ENCODE measurements at regions of chr4 and their contacts with region 1.

Region 1: GRCh38 chr4:130349745-130350144 is 1253.8 kb downstream of the C4orf33 start:
- DNase-seq: no peak
- ATAC-seq: no peak
- H3K4me3 ChIP-seq: no peak overlapping the region
- H3K27ac ChIP-seq: no peak overlapping the region
- H3K4me1 ChIP-seq: no peaks in the 10 kb centered on the region
- H3K27me3 ChIP-seq: no peaks in the 10 kb centered on the region
- CTCF ChIP-seq: no peak

Region 2: DNA sequence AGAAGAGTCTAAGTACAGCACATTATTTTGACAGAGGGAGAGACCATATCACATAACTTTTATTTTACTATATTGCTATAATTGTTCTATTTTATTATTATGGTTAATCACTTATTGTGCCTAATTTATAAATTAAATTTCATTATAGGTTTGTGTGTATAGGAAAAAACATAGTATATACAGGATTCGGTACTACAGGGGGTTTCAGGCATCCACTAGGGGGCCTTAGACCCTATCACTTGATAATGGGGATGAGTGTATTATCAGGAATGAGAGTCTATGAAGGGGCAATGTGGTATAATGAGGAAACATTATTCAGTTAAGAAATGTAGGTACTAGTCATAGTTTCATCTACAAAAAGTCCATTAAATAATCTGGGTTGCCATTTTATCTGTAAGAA is 420.7 kb before region 1 on chr4:
- CTCF ChIA-PET with region 1: no interaction called
- POLR2A ChIA-PET with region 1: no interaction called
- intact Hi-C with region 1: loop called (anchors 5 kb)
- DNase-seq: peak; percentile 7
- ATAC-seq: no peak
- H3K4me3 ChIP-seq: no peak overlapping the region
- H3K27ac ChIP-seq: no peak overlapping the region
- H3K4me1 ChIP-seq: no peaks in the 10 kb centered on the region
- H3K27me3 ChIP-seq: no peaks in the 10 kb centered on the region
- CTCF ChIP-seq: peak; percentile 48

Region 3: GRCh38 chr4:130329036-130329435 is 20.7 kb before region 1 on chr4:
- CTCF ChIA-PET with region 1: no interaction called
- POLR2A ChIA-PET with region 1: no interaction called
- intact Hi-C with region 1: no loop called
- DNase-seq: peak; percentile 20
- ATAC-seq: no peak
- H3K4me3 ChIP-seq: no peak overlapping the region
- H3K27ac ChIP-seq: no peak overlapping the region
- H3K4me1 ChIP-seq: no peaks in the 10 kb centered on the region
- H3K27me3 ChIP-seq: no peaks in the 10 kb centered on the region
- CTCF ChIP-seq: no peak

Region 4: DNA sequence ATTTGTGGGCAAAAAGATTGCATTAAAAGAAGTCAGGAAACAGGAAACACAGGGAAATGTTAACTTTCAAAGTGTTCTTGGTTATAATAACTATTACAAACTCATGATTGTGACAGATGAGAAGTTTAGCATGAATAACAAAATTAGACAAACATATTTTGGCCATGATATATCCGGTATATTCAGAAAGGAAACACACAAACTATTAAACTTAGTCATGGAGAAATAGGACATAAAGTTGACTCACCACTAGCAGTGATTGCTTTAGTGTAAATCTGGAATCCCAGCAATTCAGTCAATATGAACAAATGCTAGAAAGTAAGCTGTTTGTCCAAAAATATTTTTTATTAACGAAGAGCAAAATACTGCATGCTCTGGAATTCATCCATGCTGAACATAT is 46.1 kb after region 1 on chr4:
- CTCF ChIA-PET with region 1: no interaction called
- POLR2A ChIA-PET with region 1: no interaction called
- intact Hi-C with region 1: no loop called
- DNase-seq: peak; percentile 73
- ATAC-seq: peak; percentile 94
- H3K4me3 ChIP-seq: no peak overlapping the region
- H3K27ac ChIP-seq: peak overlapping the region; percentile 71
- H3K4me1 ChIP-seq: peaks cover 14% of the 10 kb centered on the region
- H3K27me3 ChIP-seq: no peaks in the 10 kb centered on the region
- CTCF ChIP-seq: no peak

Region 5: GRCh38 chr4:130600706-130601105 is 251.0 kb after region 1 on chr4:
- CTCF ChIA-PET with region 1: no interaction called
- POLR2A ChIA-PET with region 1: no interaction called
- intact Hi-C with region 1: no loop called
- DNase-seq: no peak
- ATAC-seq: no peak
- H3K4me3 ChIP-seq: no peak overlapping the region
- H3K27ac ChIP-seq: no peak overlapping the region
- H3K4me1 ChIP-seq: no peaks in the 10 kb centered on the region
- H3K27me3 ChIP-seq: no peaks in the 10 kb centered on the region
- CTCF ChIP-seq: no peak